Activated CD4-positive, alpha-beta T cell treated with anti-CD3 and anti-CD28 coated beads for 36 hours (primary cell): ENCODE measurements at regions of chr2 and their contacts with region 1.

Region 1: DNA sequence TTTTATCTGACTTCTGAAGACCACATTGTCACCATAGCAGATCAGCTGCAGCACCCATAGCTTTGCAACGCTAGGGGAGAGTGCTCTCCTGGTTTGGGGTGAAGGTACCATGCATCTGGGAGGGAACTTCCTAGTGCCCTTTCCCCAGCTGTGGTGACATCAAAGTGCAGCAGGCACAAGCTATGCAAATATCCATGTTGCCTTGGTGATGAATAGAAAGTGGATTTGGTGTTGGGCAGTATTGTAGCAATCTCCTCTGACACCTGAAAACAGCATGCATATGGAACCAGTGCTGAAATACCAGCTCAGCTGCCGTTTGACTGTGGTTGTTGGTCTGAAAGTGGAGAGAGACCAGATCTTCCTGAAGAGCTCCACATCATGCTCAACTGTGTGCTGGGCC is 37.1 kb downstream of the BCL2L11 start:
- DNase-seq: no peak
- ATAC-seq: peak; percentile 23
- H3K4me3 Mint-ChIP-seq: no peak overlapping the region
- H3K27ac Mint-ChIP-seq: no peak overlapping the region
- H3K4me1 Mint-ChIP-seq: peaks cover 47% of the 10 kb centered on the region
- H3K27me3 Mint-ChIP-seq: no peaks in the 10 kb centered on the region

Region 2: GRCh38 chr2:111176860-111177259 is 19.1 kb after region 1 on chr2:
- CTCF ChIA-PET with region 1: no interaction called
- POLR2A ChIA-PET with region 1: no interaction called
- intact Hi-C with region 1: loop called in 1 of 2 experiments (anchors 2 kb)
- DNase-seq: no peak
- ATAC-seq: no peak
- H3K4me3 Mint-ChIP-seq: no peak overlapping the region
- H3K27ac Mint-ChIP-seq: no peak overlapping the region
- H3K4me1 Mint-ChIP-seq: no peaks in the 10 kb centered on the region
- H3K27me3 Mint-ChIP-seq: peaks cover 19% of the 10 kb centered on the region

Region 3: DNA sequence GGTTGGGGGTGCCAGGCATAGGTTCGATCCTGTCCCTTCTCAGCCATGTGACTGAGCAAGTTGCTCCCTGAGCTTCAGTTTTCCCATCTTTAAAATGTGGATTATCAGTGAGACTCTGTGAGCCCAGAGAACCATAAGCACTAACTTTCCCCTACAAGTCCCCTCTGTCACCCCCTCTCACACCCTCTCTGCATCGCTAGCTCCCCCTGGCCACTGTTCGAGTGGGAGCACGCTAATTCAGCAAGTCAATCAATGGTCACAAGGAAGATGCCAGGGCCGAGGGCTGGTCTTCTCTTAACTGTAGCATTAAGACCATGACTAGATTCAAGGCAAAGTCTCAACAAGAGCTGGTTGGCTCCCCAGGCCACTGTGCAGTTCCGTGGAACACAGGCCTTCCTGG is 29.1 kb after region 1 on chr2:
- CTCF ChIA-PET with region 1: no interaction called
- POLR2A ChIA-PET with region 1: no interaction called
- intact Hi-C with region 1: no loop called
- DNase-seq: no peak
- ATAC-seq: no peak
- H3K4me3 Mint-ChIP-seq: no peak overlapping the region
- H3K27ac Mint-ChIP-seq: no peak overlapping the region
- H3K4me1 Mint-ChIP-seq: no peaks in the 10 kb centered on the region
- H3K27me3 Mint-ChIP-seq: peaks cover 9% of the 10 kb centered on the region

Region 4: GRCh38 chr2:111227716-111228141 is 69.9 kb after region 1 on chr2:
- CTCF ChIA-PET with region 1: no interaction called
- POLR2A ChIA-PET with region 1: no interaction called
- intact Hi-C with region 1: no loop called
- DNase-seq: no peak
- ATAC-seq: no peak
- H3K4me3 Mint-ChIP-seq: no peak overlapping the region
- H3K27ac Mint-ChIP-seq: no peak overlapping the region
- H3K4me1 Mint-ChIP-seq: peaks cover 6% of the 10 kb centered on the region
- H3K27me3 Mint-ChIP-seq: peaks cover 16% of the 10 kb centered on the region